ENCODE measurements at regions of chr1 and their contacts with region 1.

Region 1: GRCh38 chr1:70221241-70222121 is at the start of gene SRSF11:
- DNase-seq: peak; percentile 91 to 97 (median 94)
- H3K4me3 ChIP-seq: peak within 1 kb of the TSS; percentile 57 to 93 (median 81)
- H3K27ac ChIP-seq: peak within 1 kb of the TSS; percentile 72 to 98 (median 94)
- H3K27me3 ChIP-seq: no peaks in the 10 kb centered on the region
- CTCF ChIP-seq: peak in 39 of 56 donors; percentile 1 to 60 (median 24)
- total RNA-seq, gene SRSF11: 105 to 267 (median 193) TPM

Region 2: GRCh38 chr1:69551476-69552324 is 669.8 kb before region 1 on chr1:
- intact Hi-C with region 1: no loop called
- DNase-seq: no peak
- H3K4me3 ChIP-seq: no peak overlapping the region
- H3K27ac ChIP-seq: no peak overlapping the region
- H3K27me3 ChIP-seq: no peaks in the 10 kb centered on the region
- CTCF ChIP-seq: no peak

Region 3: DNA sequence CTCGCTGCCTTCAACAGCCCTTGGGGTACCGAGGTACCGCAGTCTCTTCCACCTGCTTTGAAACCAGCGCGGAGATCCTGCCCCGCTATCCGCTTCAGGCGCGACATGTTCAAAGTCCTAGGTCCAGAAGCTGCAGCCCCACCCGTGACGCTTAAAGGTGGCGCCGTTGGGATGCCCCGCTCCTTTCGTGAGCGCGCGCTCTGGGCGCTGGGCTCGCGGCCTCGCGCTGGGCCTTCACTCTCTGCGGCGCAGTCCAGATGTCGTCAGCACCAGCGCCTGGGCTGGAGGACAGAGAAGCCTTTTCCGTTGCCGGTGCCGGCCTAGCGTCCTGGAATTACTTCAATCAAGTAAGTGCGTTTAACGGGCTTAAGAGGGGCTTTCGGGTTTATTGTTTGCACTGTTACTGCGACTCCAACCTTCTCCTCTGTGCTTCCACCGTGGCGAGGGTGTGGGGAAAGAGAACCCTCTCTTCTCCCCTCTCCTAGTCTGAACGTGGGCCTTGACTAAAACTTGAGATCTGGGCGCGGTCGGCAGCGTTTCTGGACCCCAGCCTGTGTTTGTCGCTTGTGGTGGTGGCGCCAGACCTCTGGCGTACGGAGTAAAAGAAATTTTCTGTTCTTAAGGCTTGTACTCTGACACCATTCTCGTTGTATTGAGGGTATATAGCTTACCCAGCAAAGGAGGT is 15.9 kb before region 1 on chr1 and contains the start of gene LRRC40:
- intact Hi-C with region 1: loop called (anchors 1 kb)
- DNase-seq: peak; percentile 93 to 98 (median 96)
- H3K4me3 ChIP-seq: peak within 1 kb of the TSS; percentile 62 to 99 (median 90)
- H3K27ac ChIP-seq: peak within 1 kb of the TSS; percentile 44 to 95 (median 85)
- H3K27me3 ChIP-seq: no peaks in the 10 kb centered on the region
- CTCF ChIP-seq: peak in 44 of 56 donors; percentile 6 to 64 (median 36)
- total RNA-seq, gene LRRC40: 7.4 to 28.2 (median 19.2) TPM

Region 4: DNA sequence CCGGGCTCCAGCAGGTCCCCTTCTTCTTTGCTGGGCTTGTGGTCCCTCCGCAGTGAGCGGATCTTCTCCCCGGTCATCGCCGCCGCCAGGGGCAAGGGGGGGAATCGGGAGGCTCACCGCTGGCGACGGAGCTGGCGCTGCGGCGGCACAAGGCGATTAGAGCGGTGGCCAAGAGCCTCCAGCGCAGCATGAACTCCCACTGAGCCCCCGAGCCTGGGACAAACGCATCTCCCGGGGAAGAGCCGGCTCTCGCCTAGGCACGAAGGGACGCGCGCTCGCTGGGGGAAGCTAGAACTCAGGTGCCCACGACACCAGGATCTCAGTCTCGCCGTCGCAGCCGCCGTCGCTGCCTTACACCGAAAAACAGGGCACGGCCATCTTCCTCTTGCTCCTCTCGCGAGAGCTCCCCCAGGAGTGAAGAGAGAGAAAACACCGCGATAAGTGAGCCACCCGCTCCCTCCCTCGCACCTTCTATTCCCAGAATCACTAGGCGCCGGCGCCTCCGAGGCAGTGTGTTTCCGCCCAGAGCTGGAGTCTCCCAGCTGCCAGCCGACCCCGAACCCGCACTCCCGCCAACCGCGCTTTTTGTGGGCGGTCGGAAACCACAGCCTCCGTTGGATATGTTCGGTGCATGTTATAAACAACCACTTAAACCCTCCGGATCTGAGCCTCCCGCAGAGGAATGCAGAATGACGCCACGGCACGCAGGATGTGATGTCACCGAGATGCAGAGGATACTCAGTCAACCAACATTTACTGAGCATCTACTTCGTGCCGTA is 133.0 kb after region 1 on chr1 and contains the start of gene ANKRD13C:
- intact Hi-C with region 1: loop called (anchors 5 to 10 kb)
- DNase-seq: peak; percentile 76 to 97 (median 92)
- H3K4me3 ChIP-seq: peak within 1 kb of the TSS; percentile 68 to 97 (median 87)
- H3K27ac ChIP-seq: peak within 1 kb of the TSS; percentile 85 to 99 (median 96)
- H3K27me3 ChIP-seq: no peaks in the 10 kb centered on the region
- CTCF ChIP-seq: peak in 37 of 56 donors; percentile 3 to 59 (median 32)
- total RNA-seq, gene ANKRD13C: 25.3 to 47.0 (median 36.2) TPM

Measured in dorsolateral prefrontal cortex (tissue), 120 donors.